ENCODE measurements at regions of chr7 and their contacts with region 1.

Region 1: DNA sequence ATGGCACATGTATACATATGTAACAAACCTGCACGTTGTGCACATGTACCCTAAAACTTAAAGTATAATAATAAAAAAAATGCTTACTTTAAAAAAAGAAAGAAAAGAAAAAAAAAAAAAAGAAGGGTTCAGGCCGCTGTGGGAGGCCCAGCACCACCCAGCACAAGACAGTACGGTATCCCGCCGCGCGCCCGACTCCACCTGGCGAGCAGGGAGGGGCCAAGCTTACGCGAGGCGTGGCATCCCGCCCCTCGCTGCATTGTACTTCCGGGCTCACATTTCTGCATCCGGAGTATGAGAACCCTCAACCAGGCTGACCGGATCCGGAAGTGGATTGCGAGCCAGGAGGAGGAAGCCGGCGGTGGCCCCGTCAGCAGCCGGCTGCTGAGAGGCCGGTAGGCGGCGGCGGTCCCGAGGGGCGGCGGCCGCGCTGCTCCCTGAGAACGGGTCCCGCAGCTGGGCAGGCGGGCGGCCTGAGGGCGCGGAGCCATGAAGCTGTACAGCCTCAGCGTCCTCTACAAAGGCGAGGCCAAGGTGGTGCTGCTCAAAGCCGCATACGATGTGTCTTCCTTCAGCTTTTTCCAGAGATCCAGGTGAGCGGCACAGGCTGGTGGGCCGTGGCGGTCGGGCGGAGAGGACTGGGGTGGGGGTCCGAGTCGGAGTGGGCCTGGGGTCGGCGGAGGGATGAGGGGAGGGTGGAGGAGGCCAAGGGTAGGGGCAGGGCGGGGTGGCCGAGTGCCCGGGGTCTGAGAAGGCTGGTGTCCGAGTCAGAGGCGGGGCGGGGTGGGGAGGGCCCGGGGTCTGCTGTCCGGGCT is at the start of gene YKT6:
- DNase-seq: peak; percentile 73 to 94 (median 93)
- ATAC-seq: peak; percentile 99
- H3K4me3 ChIP-seq: peak within 1 kb of the TSS; percentile 95
- H3K4me3 Mint-ChIP-seq: peak within 1 kb of the TSS; percentile 81 to 90 (median 85)
- H3K27ac ChIP-seq: peak within 1 kb of the TSS; percentile 91
- H3K27ac Mint-ChIP-seq: peak within 1 kb of the TSS; percentile 19 to 88 (median 63)
- H3K4me1 ChIP-seq: peaks cover 15 to 16% of the 10 kb centered on the region in 2 donors
- H3K4me1 Mint-ChIP-seq: peaks cover 24 to 38% (median 32%) of the 10 kb centered on the region in 7 donors
- H3K27me3 ChIP-seq: no peaks in the 10 kb centered on the region
- H3K27me3 Mint-ChIP-seq: peaks cover 0 to 7% (median 3%) of the 10 kb centered on the region in 5 donors
- total RNA-seq, gene YKT6: 58.1 to 80.9 (median 62.3) TPM

Region 2: GRCh38 chr7:43869006-43869866 is 331.6 kb before region 1 on chr7 and contains the start of gene MRPS24:
- CTCF ChIA-PET with region 1: no interaction called
- POLR2A ChIA-PET with region 1: no interaction called
- intact Hi-C with region 1: loop called in 1 of 2 experiments (anchors 5 kb)
- DNase-seq: peak; percentile 84 to 95 (median 92)
- ATAC-seq: peak; percentile 100
- H3K4me3 ChIP-seq: peak within 1 kb of the TSS; percentile 92
- H3K4me3 Mint-ChIP-seq: peak within 1 kb of the TSS; percentile 88 to 97 (median 95)
- H3K27ac ChIP-seq: peak within 1 kb of the TSS; percentile 78
- H3K27ac Mint-ChIP-seq: peak within 1 kb of the TSS; percentile 86 to 97 (median 90)
- H3K4me1 ChIP-seq: peaks cover 13 to 15% of the 10 kb centered on the region in 2 donors
- H3K4me1 Mint-ChIP-seq: peaks cover 0 to 24% (median 22%) of the 10 kb centered on the region in 7 donors
- H3K27me3 ChIP-seq: no peaks in the 10 kb centered on the region
- H3K27me3 Mint-ChIP-seq: no peaks in the 10 kb centered on the region
- total RNA-seq, gene MRPS24: 44.2 to 76.6 (median 62.3) TPM

Region 3: DNA sequence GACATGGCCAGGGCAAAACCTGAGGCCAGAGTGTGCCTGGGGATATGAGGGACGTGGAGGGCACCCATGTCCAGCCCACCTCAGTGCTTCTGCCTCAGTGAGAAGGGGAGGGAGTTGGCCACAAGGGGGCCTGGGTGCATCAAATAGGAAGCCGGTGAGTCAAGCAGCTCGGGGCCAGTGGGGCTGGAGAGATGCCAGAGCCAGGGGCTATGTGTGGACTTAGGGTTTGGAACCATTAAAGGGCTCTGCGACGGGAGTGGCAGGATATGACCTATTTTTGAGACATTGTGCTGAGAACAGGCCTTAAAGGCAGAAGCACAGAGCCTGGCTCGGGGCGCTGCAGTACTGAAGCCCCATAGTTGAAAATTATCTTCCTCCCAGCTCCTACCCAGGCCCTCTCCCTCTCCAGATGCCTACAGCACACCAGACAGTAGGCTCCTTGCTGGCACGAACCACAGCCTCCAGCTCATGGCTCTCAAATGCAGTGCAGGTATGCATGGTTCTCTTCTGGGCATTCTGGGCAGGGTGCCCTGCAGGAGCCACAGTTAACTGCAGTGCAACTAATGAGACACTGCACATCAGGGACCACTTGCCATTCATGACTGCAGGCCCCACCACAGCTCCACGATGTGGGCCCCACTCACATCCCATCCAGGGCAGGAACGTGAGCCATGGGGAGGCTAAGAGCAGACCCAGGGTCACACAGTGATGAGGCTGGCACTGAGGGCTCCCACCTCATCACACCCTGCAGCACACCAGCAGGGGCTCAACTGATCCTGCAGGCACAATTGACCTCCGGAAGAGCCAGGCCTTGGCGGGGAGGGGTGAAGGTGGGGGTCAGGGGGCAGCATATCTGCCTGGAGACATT is 128.3 kb before region 1 on chr7:
- CTCF ChIA-PET with region 1: interaction called, 3 read pairs
- POLR2A ChIA-PET with region 1: no interaction called
- intact Hi-C with region 1: loop called (anchors 1 to 2 kb)
- DNase-seq: peak in 2 of 9 donors; percentile 26 to 36
- ATAC-seq: peak; percentile 46
- H3K4me3 ChIP-seq: no peak overlapping the region
- H3K4me3 Mint-ChIP-seq: no peak overlapping the region
- H3K27ac ChIP-seq: no peak overlapping the region
- H3K27ac Mint-ChIP-seq: peak overlapping the region in 7 of 9 donors; percentile 9 to 77 (median 60)
- H3K4me1 ChIP-seq: no peaks in the 10 kb centered on the region
- H3K4me1 Mint-ChIP-seq: peaks cover 2 to 34% (median 18%) of the 10 kb centered on the region in 7 donors
- H3K27me3 ChIP-seq: no peaks in the 10 kb centered on the region
- H3K27me3 Mint-ChIP-seq: no peaks in the 10 kb centered on the region

Region 4: GRCh38 chr7:44145969-44146911 is 54.6 kb before region 1 on chr7:
- CTCF ChIA-PET with region 1: no interaction called
- POLR2A ChIA-PET with region 1: no interaction called
- intact Hi-C with region 1: loop called (anchors 1 to 2 kb)
- DNase-seq: peak; percentile 21 to 81 (median 51)
- ATAC-seq: peak; percentile 80
- H3K4me3 ChIP-seq: peak overlapping the region; percentile 59
- H3K4me3 Mint-ChIP-seq: peak overlapping the region; percentile 68 to 89 (median 83)
- H3K27ac ChIP-seq: peak overlapping the region; percentile 52
- H3K27ac Mint-ChIP-seq: peak overlapping the region in 8 of 9 donors; percentile 46 to 91 (median 78)
- H3K4me1 ChIP-seq: no peaks in the 10 kb centered on the region
- H3K4me1 Mint-ChIP-seq: peaks cover 0 to 11% (median 7%) of the 10 kb centered on the region in 7 donors
- H3K27me3 ChIP-seq: no peaks in the 10 kb centered on the region
- H3K27me3 Mint-ChIP-seq: peaks cover 0 to 9% (median 0%) of the 10 kb centered on the region in 5 donors

Region 5: GRCh38 chr7:44477063-44477830 is 276.4 kb after region 1 on chr7:
- CTCF ChIA-PET with region 1: no interaction called
- POLR2A ChIA-PET with region 1: no interaction called
- intact Hi-C with region 1: loop called in 1 of 2 experiments (anchors 5 kb)
- DNase-seq: peak; percentile 18 to 68 (median 58)
- ATAC-seq: peak; percentile 98
- H3K4me3 ChIP-seq: no peak overlapping the region
- H3K4me3 Mint-ChIP-seq: peak overlapping the region in 5 of 10 donors; percentile 1 to 32 (median 4)
- H3K27ac ChIP-seq: no peak overlapping the region
- H3K27ac Mint-ChIP-seq: peak overlapping the region in 7 of 9 donors; percentile 2 to 93 (median 78)
- H3K4me1 ChIP-seq: peaks cover 0 to 15% of the 10 kb centered on the region in 2 donors
- H3K4me1 Mint-ChIP-seq: peaks cover 26 to 86% (median 71%) of the 10 kb centered on the region in 7 donors
- H3K27me3 ChIP-seq: no peaks in the 10 kb centered on the region
- H3K27me3 Mint-ChIP-seq: no peaks in the 10 kb centered on the region

Region 6: DNA sequence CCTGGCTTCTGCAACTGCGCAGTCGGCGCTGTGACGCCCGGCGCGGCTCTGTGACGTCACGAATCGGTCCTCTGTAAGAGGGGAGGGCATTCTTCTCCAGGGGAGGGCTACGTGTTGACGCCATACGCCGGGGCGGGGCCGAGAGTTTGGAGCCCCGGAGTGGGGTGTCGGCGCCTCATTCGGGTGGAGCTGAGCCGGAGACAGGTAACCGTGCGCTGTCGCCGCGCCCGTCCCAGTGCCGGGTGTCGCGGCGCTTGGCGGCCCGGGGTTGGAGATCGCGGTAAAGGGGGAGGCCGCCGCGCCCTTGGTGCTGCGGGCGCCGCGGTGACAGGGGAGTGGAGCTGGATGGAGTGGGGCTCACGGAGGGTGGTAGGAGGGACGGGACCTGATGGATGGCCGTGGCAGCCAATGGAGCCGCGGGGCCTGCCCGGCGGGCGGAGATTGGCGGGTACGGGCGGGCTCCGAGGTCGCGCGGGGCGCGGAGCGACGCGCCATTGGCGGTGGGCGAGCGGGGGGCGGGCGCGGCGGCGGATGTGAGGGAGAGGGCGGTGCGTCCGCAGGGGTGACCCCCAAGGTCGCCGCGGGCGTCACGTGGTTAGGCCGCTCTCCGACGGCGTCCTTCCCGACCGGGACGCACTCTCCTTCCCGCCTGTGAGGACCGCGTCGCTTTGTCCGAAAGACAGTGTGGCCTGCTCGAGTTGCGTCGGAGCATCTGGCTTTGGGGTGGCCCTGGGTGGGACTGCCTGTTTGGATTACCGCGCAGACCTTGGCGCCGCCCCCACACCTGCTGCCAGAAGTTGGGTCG is 405.8 kb after region 1 on chr7 and contains the start of gene OGDH:
- CTCF ChIA-PET with region 1: no interaction called
- POLR2A ChIA-PET with region 1: no interaction called
- intact Hi-C with region 1: loop called in 1 of 2 experiments (anchors 1 kb)
- DNase-seq: peak; percentile 99 to 100 (median 100)
- ATAC-seq: peak; percentile 95
- H3K4me3 ChIP-seq: peak within 1 kb of the TSS; percentile 71
- H3K4me3 Mint-ChIP-seq: peak within 1 kb of the TSS; percentile 81 to 99 (median 98)
- H3K27ac ChIP-seq: peak within 1 kb of the TSS; percentile 93
- H3K27ac Mint-ChIP-seq: peak within 1 kb of the TSS; percentile 93 to 100 (median 98)
- H3K4me1 ChIP-seq: peaks cover 13 to 17% of the 10 kb centered on the region in 2 donors
- H3K4me1 Mint-ChIP-seq: peaks cover 0 to 45% (median 37%) of the 10 kb centered on the region in 7 donors
- H3K27me3 ChIP-seq: no peaks in the 10 kb centered on the region
- H3K27me3 Mint-ChIP-seq: peaks cover 0 to 20% (median 0%) of the 10 kb centered on the region in 5 donors
- total RNA-seq, gene OGDH: 43.1 to 122 (median 66.3) TPM

Measured in naive thymus-derived CD4-positive, alpha-beta T cell (primary cell).